OCI-LY7 (cell line): ENCODE measurements at regions of chr12 and their contacts with region 1.

Region 1: GRCh38 chr12:110501752-110502738 is at the starts of genes RAD9B and VPS29:
- DNase-seq: peak; percentile 99
- H3K4me3 ChIP-seq: peak within 1 kb of the TSS; percentile 93
- H3K27ac ChIP-seq: peak within 1 kb of the TSS; percentile 80
- H3K4me1 ChIP-seq: peaks cover 29% of the 10 kb centered on the region
- CTCF ChIP-seq: 0 out of 2 replicates have a peak, but pooled peaks have one; percentile 4
- total RNA-seq, gene RAD9B: 0.46 and 0.76 TPM in 2 replicates
- total RNA-seq, gene VPS29: 52.3 and 80.3 TPM in 2 replicates

Region 2: GRCh38 chr12:110468212-110469048 is 33.6 kb before region 1 on chr12 and contains the starts of genes FAM216A and GPN3:
- CTCF ChIA-PET with region 1: interaction called, 4 read pairs
- POLR2A ChIA-PET with region 1: interaction called, 11 read pairs
- intact Hi-C with region 1: loop called (anchors 1 kb)
- DNase-seq: peak; percentile 99
- H3K4me3 ChIP-seq: peak within 1 kb of the TSS; percentile 95
- H3K27ac ChIP-seq: peak within 1 kb of the TSS; percentile 82
- H3K4me1 ChIP-seq: peaks cover 30% of the 10 kb centered on the region
- CTCF ChIP-seq: no peak
- total RNA-seq, gene FAM216A: 62.5 and 64.6 TPM in 2 replicates
- total RNA-seq, gene GPN3: 18.6 and 24.2 TPM in 2 replicates